ENCODE measurements at regions of chr18 and their contacts with region 1.

Region 1: GRCh38 chr18:7789856-7790552 is 222.9 kb downstream of the PTPRM start:
- DNase-seq: no peak
- ATAC-seq: peak; percentile 42 to 52 (median 46)
- H3K4me3 ChIP-seq: no peak overlapping the region
- H3K27ac ChIP-seq: peak overlapping the region in 9 of 12 donors; percentile 1 to 49 (median 17)
- H3K4me1 ChIP-seq: peaks cover 0 to 46% (median 15%) of the 10 kb centered on the region in 12 donors
- H3K27me3 ChIP-seq: no peaks in the 10 kb centered on the region
- CTCF ChIP-seq: peak; percentile 37 to 67 (median 55)
- POLR2A ChIP-seq: no peak

Region 2: GRCh38 chr18:7830468-7830867 is 40.5 kb after region 1 on chr18:
- intact Hi-C with region 1: no loop called
- DNase-seq: no peak
- ATAC-seq: peak in 2 of 4 donors; percentile 20 to 27
- H3K4me3 ChIP-seq: no peak overlapping the region
- H3K27ac ChIP-seq: no peak overlapping the region
- H3K4me1 ChIP-seq: peaks cover 0 to 18% (median 2%) of the 10 kb centered on the region in 12 donors
- H3K27me3 ChIP-seq: no peaks in the 10 kb centered on the region
- CTCF ChIP-seq: no peak
- POLR2A ChIP-seq: no peak

Region 3: GRCh38 chr18:7856733-7857132 is 66.7 kb after region 1 on chr18:
- intact Hi-C with region 1: loop called in 2 of 10 experiments (anchors 10 kb)
- DNase-seq: no peak
- ATAC-seq: no peak
- H3K4me3 ChIP-seq: no peak overlapping the region
- H3K27ac ChIP-seq: peak overlapping the region in 3 of 12 donors; percentile 8 to 79 (median 53)
- H3K4me1 ChIP-seq: peaks cover 0 to 77% (median 30%) of the 10 kb centered on the region in 12 donors
- H3K27me3 ChIP-seq: no peaks in the 10 kb centered on the region
- CTCF ChIP-seq: no peak
- POLR2A ChIP-seq: no peak

Region 4: GRCh38 chr18:7958081-7958896 is 168.3 kb after region 1 on chr18:
- intact Hi-C with region 1: loop called in 1 of 10 experiments (anchors 5 kb)
- DNase-seq: no peak
- ATAC-seq: no peak
- H3K4me3 ChIP-seq: no peak overlapping the region
- H3K27ac ChIP-seq: peak overlapping the region in 4 of 12 donors; percentile 1 to 52 (median 21)
- H3K4me1 ChIP-seq: peaks cover 0 to 66% (median 26%) of the 10 kb centered on the region in 12 donors
- H3K27me3 ChIP-seq: no peaks in the 10 kb centered on the region
- CTCF ChIP-seq: no peak
- POLR2A ChIP-seq: no peak

Region 5: GRCh38 chr18:7980136-7980535 is 190.1 kb after region 1 on chr18:
- intact Hi-C with region 1: loop called in 1 of 10 experiments (anchors 10 kb)
- DNase-seq: no peak
- ATAC-seq: no peak
- H3K4me3 ChIP-seq: no peak overlapping the region
- H3K27ac ChIP-seq: no peak overlapping the region
- H3K4me1 ChIP-seq: peaks cover 3 to 44% (median 10%) of the 10 kb centered on the region in 12 donors
- H3K27me3 ChIP-seq: no peaks in the 10 kb centered on the region
- CTCF ChIP-seq: peak in 1 of 12 donors; percentile 20
- POLR2A ChIP-seq: no peak

Region 6: GRCh38 chr18:8073167-8073566 is 283.2 kb after region 1 on chr18:
- intact Hi-C with region 1: loop called in 1 of 10 experiments (anchors 10 kb)
- DNase-seq: no peak
- ATAC-seq: no peak
- H3K4me3 ChIP-seq: no peak overlapping the region
- H3K27ac ChIP-seq: no peak overlapping the region
- H3K4me1 ChIP-seq: peaks cover 0 to 4% (median 0%) of the 10 kb centered on the region in 12 donors
- H3K27me3 ChIP-seq: no peaks in the 10 kb centered on the region
- CTCF ChIP-seq: no peak
- POLR2A ChIP-seq: no peak

Region 7: GRCh38 chr18:8389391-8390340 is 599.7 kb after region 1 on chr18:
- intact Hi-C with region 1: loop called in 2 of 10 experiments (anchors 10 kb)
- DNase-seq: peak in 4 of 5 donors; percentile 47 to 67 (median 60)
- ATAC-seq: peak; percentile 81 to 92 (median 84)
- H3K4me3 ChIP-seq: no peak overlapping the region
- H3K27ac ChIP-seq: no peak overlapping the region
- H3K4me1 ChIP-seq: peaks cover 0 to 4% (median 0%) of the 10 kb centered on the region in 12 donors
- H3K27me3 ChIP-seq: no peaks in the 10 kb centered on the region
- CTCF ChIP-seq: peak; percentile 56 to 84 (median 76)
- POLR2A ChIP-seq: no peak

Measured in heart left ventricle (tissue), 16 donors.